Heart left ventricle (tissue), 16 donors: ENCODE measurements at regions of chr6 and their contacts with region 1.

Region 1: DNA sequence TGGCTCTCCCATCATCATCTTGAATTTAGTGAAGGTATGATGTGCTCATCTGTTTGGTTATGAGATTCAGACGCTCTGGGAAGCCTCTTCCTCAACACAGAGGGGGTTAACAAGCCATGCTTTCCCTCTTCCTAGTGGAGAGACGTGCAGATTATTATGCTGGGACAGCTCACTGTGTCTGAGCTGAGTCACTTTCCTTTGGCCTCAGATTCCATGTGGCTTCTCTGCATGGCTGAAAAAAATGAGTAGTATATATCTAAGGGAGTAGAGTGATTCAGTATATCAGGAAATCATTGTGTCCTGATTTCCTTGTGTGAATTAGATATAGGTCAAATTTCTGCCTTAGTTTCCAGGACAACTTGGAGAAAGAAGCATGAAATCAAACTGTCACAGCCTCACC is 52.6 kb downstream of the FIG4 start:
- DNase-seq: no peak
- ATAC-seq: no peak
- H3K4me3 ChIP-seq: no peak overlapping the region
- H3K27ac ChIP-seq: no peak overlapping the region
- H3K4me1 ChIP-seq: peaks cover 0 to 7% (median 0%) of the 10 kb centered on the region in 12 donors
- H3K27me3 ChIP-seq: no peaks in the 10 kb centered on the region
- CTCF ChIP-seq: no peak
- POLR2A ChIP-seq: no peak

Region 2: DNA sequence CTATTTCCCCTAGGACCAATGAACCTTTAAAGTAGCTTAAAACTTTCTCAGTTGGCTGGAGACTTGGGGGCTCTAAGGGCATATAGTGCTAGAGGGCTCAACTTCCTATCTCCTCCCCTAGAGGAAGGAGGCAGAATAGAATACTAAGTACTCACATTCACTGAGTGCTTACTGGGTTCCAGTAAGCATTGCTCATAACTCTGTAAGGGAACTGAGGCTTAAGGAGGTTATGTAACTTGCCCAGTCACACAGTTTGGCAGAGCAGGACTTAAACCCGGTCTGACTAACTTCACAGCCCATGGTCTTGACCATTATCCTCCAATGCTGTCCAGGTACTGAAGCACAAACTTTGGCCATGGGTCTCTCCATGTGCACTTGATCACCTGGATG is 661.6 kb before region 1 on chr6:
- intact Hi-C with region 1: no loop called
- DNase-seq: no peak
- ATAC-seq: peak in 3 of 4 donors; percentile 5 to 60 (median 44)
- H3K4me3 ChIP-seq: no peak overlapping the region
- H3K27ac ChIP-seq: peak overlapping the region in 11 of 12 donors; percentile 50 to 88 (median 81)
- H3K4me1 ChIP-seq: peaks cover 0 to 79% (median 40%) of the 10 kb centered on the region in 12 donors
- H3K27me3 ChIP-seq: no peaks in the 10 kb centered on the region
- CTCF ChIP-seq: peak in 1 of 12 donors; percentile 18
- POLR2A ChIP-seq: no peak

Region 3: GRCh38 chr6:109760208-109760607 is 16.5 kb after region 1 on chr6:
- intact Hi-C with region 1: loop called in 1 of 10 experiments (anchors 2 kb)
- DNase-seq: no peak
- ATAC-seq: peak in 2 of 4 donors; percentile 49 to 66
- H3K4me3 ChIP-seq: no peak overlapping the region
- H3K27ac ChIP-seq: peak overlapping the region in 7 of 12 donors; percentile 3 to 71 (median 27)
- H3K4me1 ChIP-seq: peaks cover 0 to 8% (median 0%) of the 10 kb centered on the region in 12 donors
- H3K27me3 ChIP-seq: no peaks in the 10 kb centered on the region
- CTCF ChIP-seq: no peak
- POLR2A ChIP-seq: no peak